Gastrocnemius medialis (tissue), 4 donors: ENCODE measurements at regions of chr1 and their contacts with region 1.

Region 1: GRCh38 chr1:115138968-115139367 is 49.7 kb upstream of the TSPAN2 start:
- DNase-seq: peak; percentile 79 to 86
- ATAC-seq: peak; percentile 91 to 92
- H3K4me3 ChIP-seq: no peak overlapping the region
- H3K27ac ChIP-seq: peak overlapping the region in 1 of 4 donors; percentile 42
- H3K4me1 ChIP-seq: peaks cover 9 to 17% of the 10 kb centered on the region in 2 donors
- H3K27me3 ChIP-seq: no peaks in the 10 kb centered on the region
- CTCF ChIP-seq: peak; percentile 85 to 95 (median 90)
- POLR2A ChIP-seq: no peak

Region 2: DNA sequence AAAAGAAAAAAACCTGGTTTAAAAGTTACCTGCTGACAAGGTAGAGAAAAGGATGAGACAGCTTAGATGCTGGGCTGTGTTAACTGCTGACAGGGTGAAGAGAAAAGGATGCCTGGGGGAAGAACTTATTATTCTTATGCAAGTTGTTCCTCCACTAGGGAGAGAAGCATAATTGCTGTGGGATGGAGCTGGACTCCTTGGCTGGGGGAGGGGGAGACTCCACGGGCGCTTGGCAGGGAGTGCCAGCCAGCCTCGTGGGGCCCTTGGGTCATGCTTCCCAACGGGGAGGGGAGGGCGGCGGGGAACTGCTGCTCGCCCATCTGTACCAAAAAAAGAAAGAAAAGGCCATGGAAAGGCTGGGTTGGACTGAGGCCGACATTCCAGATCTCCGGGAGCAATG is 237.2 kb before region 1 on chr1:
- in situ Hi-C with region 1: no loop called
- intact Hi-C with region 1: no loop called
- DNase-seq: no peak
- ATAC-seq: no peak
- H3K4me3 ChIP-seq: no peak overlapping the region
- H3K27ac ChIP-seq: no peak overlapping the region
- H3K4me1 ChIP-seq: no peaks in the 10 kb centered on the region
- H3K27me3 ChIP-seq: no peaks in the 10 kb centered on the region
- CTCF ChIP-seq: no peak
- POLR2A ChIP-seq: no peak

Region 3: GRCh38 chr1:115251856-115252255 is 112.9 kb after region 1 on chr1:
- in situ Hi-C with region 1: no loop called
- intact Hi-C with region 1: no loop called
- DNase-seq: no peak
- ATAC-seq: no peak
- H3K4me3 ChIP-seq: no peak overlapping the region
- H3K27ac ChIP-seq: no peak overlapping the region
- H3K4me1 ChIP-seq: no peaks in the 10 kb centered on the region
- H3K27me3 ChIP-seq: no peaks in the 10 kb centered on the region
- CTCF ChIP-seq: no peak
- POLR2A ChIP-seq: no peak

Region 4: DNA sequence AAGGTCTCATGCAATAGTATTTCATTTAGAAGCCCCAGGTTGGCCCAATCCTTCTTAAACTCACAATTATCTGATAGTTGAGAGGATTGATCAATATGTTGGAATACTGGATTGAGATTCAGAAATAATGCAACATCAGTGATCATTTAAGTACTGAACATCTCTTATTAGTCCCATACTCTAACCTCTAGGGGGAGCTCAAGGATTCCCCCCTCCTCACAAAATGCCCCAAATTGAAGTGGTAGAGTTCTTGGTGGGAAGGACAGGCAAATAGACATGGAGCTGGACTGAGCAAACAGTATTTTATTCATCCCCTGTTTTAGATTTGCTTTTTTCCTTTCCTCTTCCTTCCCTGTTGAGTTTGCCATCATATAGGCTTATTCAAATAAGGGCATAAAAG is 136.2 kb after region 1 on chr1:
- in situ Hi-C with region 1: no loop called
- intact Hi-C with region 1: loop called (anchors 10 kb)
- DNase-seq: no peak
- ATAC-seq: no peak
- H3K4me3 ChIP-seq: no peak overlapping the region
- H3K27ac ChIP-seq: no peak overlapping the region
- H3K4me1 ChIP-seq: no peaks in the 10 kb centered on the region
- H3K27me3 ChIP-seq: no peaks in the 10 kb centered on the region
- CTCF ChIP-seq: no peak
- POLR2A ChIP-seq: no peak

Region 5: GRCh38 chr1:115456441-115456961 is 317.5 kb after region 1 on chr1:
- in situ Hi-C with region 1: no loop called
- intact Hi-C with region 1: loop called (anchors 2 kb)
- DNase-seq: peak in 1 of 2 donors; percentile 49
- ATAC-seq: peak; percentile 37 to 77
- H3K4me3 ChIP-seq: no peak overlapping the region
- H3K27ac ChIP-seq: peak overlapping the region; percentile 50 to 68 (median 58)
- H3K4me1 ChIP-seq: peaks cover 5 to 7% of the 10 kb centered on the region in 2 donors
- H3K27me3 ChIP-seq: no peaks in the 10 kb centered on the region
- CTCF ChIP-seq: no peak
- POLR2A ChIP-seq: no peak

Region 6: GRCh38 chr1:115595279-115596079 is 456.5 kb after region 1 on chr1:
- in situ Hi-C with region 1: loop called (anchors 5 to 10 kb)
- intact Hi-C with region 1: loop called (anchors 1 kb)
- DNase-seq: peak; percentile 47 to 66
- ATAC-seq: peak; percentile 69 to 77
- H3K4me3 ChIP-seq: no peak overlapping the region
- H3K27ac ChIP-seq: no peak overlapping the region
- H3K4me1 ChIP-seq: no peaks in the 10 kb centered on the region
- H3K27me3 ChIP-seq: no peaks in the 10 kb centered on the region
- CTCF ChIP-seq: peak; percentile 61 to 93 (median 76)
- POLR2A ChIP-seq: no peak